A673 (cell line): ENCODE measurements at regions of chr6 and their contacts with region 1.

Region 1: DNA sequence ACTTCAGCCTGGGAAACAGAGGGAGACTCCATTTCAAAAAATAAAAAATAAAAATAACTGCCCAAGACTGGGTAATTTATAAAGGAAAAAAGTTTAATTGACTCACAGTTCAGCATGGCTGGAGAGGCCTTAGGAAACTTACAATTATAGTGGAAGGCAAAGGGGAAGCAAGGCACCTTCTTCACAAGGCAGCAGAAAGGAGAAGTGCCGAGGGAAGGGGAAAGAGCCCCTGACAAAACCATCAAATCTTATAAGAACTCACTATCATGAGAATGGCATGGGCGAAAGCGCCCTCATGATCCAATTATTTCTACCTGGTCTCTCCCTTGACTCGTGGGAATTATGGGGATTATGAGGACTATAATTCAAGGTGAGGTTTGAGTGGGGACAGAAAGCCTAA is 95.5 kb upstream of the LGSN start:
- DNase-seq: no peak
- H3K4me3 ChIP-seq: no peak overlapping the region
- H3K27ac ChIP-seq: no peak overlapping the region
- H3K4me1 ChIP-seq: no peaks in the 10 kb centered on the region
- H3K27me3 ChIP-seq: no peaks in the 10 kb centered on the region
- CTCF ChIP-seq: no peak

Region 2: DNA sequence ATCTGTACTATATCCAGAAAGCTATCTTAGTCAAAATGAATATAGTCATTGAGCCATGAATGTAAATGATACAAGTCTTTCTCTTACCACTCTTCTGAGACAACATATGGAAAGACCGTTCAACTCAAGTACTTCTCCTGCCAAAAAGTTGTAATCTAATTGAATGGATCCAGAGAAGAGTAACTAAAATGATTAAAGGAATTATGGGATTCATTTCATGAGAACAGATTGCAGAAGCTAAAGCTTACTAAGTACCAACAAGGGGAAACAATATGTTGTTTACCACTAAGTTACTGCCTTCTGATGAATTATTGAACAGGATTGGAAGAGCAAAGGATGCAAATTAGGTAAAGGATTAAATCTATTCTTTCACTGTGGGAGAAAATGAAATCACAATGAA is 93.5 kb before region 1 on chr6:
- CTCF ChIA-PET with region 1: no interaction called
- POLR2A ChIA-PET with region 1: no interaction called
- intact Hi-C with region 1: no loop called
- DNase-seq: no peak
- H3K4me3 ChIP-seq: no peak overlapping the region
- H3K27ac ChIP-seq: no peak overlapping the region
- H3K4me1 ChIP-seq: peaks cover 6% of the 10 kb centered on the region
- H3K27me3 ChIP-seq: no peaks in the 10 kb centered on the region
- CTCF ChIP-seq: no peak

Region 3: GRCh38 chr6:63333440-63333839 is 81.8 kb before region 1 on chr6:
- CTCF ChIA-PET with region 1: interaction called, 10 read pairs
- POLR2A ChIA-PET with region 1: no interaction called
- intact Hi-C with region 1: no loop called
- DNase-seq: no peak
- H3K4me3 ChIP-seq: no peak overlapping the region
- H3K27ac ChIP-seq: no peak overlapping the region
- H3K4me1 ChIP-seq: no peaks in the 10 kb centered on the region
- H3K27me3 ChIP-seq: no peaks in the 10 kb centered on the region
- CTCF ChIP-seq: no peak